ENCODE measurements at regions of chr4 and their contacts with region 1.

Region 1: GRCh38 chr4:22369901-22370562 is 145.8 kb downstream of the ADGRA3 start:
- DNase-seq: no peak
- ATAC-seq: no peak

Region 2: GRCh38 chr4:22356987-22357596 is 12.9 kb before region 1 on chr4:
- intact Hi-C with region 1: loop called in 1 of 2 experiments (anchors 2 kb)
- DNase-seq: no peak
- ATAC-seq: no peak

Measured in left cardiac atrium (tissue), 4 donors.